Breast epithelium (tissue), 4 donors: ENCODE measurements at regions of chr1 and their contacts with region 1.

Region 1: GRCh38 chr1:55318116-55318817 is 103.1 kb upstream of the USP24 start:
- DNase-seq: no peak
- H3K4me3 ChIP-seq: no peak overlapping the region
- H3K27ac ChIP-seq: no peak overlapping the region
- H3K4me1 ChIP-seq: no peaks in the 10 kb centered on the region
- H3K27me3 ChIP-seq: no peaks in the 10 kb centered on the region
- CTCF ChIP-seq: no peak
- POLR2A ChIP-seq: no peak

Region 2: GRCh38 chr1:55337801-55338447 is 19.7 kb after region 1 on chr1:
- intact Hi-C with region 1: loop called (anchors 1 kb)
- DNase-seq: no peak
- H3K4me3 ChIP-seq: no peak overlapping the region
- H3K27ac ChIP-seq: no peak overlapping the region
- H3K4me1 ChIP-seq: no peaks in the 10 kb centered on the region
- H3K27me3 ChIP-seq: no peaks in the 10 kb centered on the region
- CTCF ChIP-seq: peak in 1 of 3 donors; percentile 19
- POLR2A ChIP-seq: no peak